ENCODE measurements at regions of chr7 and their contacts with region 1.

Region 1: DNA sequence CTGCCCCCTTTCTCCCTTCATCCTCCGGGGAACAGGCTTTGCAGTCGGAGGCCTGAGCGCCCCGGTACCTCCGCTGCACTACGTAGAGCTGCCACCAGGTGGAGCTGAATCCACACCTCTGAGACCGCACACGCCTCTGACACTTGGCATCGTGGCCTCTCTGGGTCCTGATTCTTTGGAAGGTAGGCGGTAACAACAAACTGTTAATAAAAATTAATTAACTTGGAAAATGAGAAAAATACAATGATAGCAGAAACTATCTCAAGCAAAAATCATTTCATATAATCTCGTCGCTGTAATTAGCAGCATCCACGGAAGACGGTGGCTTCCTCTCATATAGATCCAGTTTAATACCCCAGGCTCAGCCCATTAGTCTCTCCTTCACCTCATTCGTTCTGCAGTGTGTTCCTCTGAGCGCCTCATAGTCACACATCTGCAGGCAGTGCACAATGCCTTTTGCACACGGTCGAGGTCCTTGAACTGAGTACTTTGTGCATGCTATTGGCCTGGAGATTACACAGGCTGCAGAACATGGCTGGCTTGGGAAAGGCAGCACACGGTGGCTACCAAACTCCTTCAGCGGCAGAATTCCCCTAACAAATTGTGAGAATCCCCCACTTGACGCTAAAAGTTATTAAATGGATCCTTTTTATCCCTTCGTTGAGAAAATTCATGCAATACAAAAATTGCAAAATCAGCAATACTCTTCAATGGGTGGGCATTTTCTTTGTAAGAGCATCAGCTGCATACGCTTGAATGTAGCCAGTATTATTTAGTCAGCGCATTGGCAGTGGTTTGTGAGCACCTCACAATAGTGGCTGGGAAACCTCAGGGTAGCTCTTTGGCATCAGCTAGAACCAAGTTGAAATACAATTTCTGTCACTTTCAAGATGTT is 18.7 kb downstream of the OR9A2 start:
- DNase-seq: peak; percentile 78 to 91
- ATAC-seq: peak; percentile 95 to 99 (median 98)
- H3K4me3 ChIP-seq: no peak overlapping the region
- H3K4me3 Mint-ChIP-seq: no peak overlapping the region
- H3K27ac ChIP-seq: no peak overlapping the region
- H3K27ac Mint-ChIP-seq: no peak overlapping the region
- H3K4me1 ChIP-seq: peaks cover 2% of the 10 kb centered on the region
- H3K4me1 Mint-ChIP-seq: peaks cover 10 to 11% of the 10 kb centered on the region in 2 donors
- H3K27me3 ChIP-seq: no peaks in the 10 kb centered on the region
- H3K27me3 Mint-ChIP-seq: peaks cover 20 to 21% of the 10 kb centered on the region in 2 donors
- CTCF ChIP-seq: peak; percentile 91

Region 2: DNA sequence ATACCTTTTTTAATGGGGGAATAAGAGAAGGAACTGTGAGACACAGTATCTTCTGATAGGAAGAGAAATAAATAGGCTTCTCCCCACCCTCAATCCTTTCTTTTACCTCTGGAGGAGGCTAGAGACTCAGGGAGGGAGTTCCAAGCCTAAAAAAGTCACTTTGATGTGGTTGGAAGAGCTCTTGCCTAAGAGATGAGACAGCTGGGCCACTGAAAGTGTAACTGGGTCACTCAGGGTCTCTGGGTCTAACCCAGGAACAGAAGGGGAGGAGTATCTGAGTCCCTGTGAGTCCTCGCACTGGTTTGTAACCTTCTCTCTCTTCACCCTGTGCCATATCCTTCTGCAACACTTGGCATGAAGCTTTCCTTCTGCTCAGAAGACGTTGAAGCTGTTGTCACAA is 1680.0 kb before region 1 on chr7:
- intact Hi-C with region 1: no loop called
- DNase-seq: no peak
- ATAC-seq: no peak
- H3K4me3 ChIP-seq: no peak overlapping the region
- H3K4me3 Mint-ChIP-seq: no peak overlapping the region
- H3K27ac ChIP-seq: no peak overlapping the region
- H3K27ac Mint-ChIP-seq: no peak overlapping the region
- H3K4me1 ChIP-seq: no peaks in the 10 kb centered on the region
- H3K4me1 Mint-ChIP-seq: no peaks in the 10 kb centered on the region
- H3K27me3 ChIP-seq: no peaks in the 10 kb centered on the region
- H3K27me3 Mint-ChIP-seq: peaks cover 8 to 12% of the 10 kb centered on the region in 2 donors
- CTCF ChIP-seq: no peak

Region 3: GRCh38 chr7:142603870-142604448 is 404.3 kb before region 1 on chr7:
- intact Hi-C with region 1: loop called (anchors 1 kb)
- DNase-seq: peak in 1 of 2 donors; percentile 78
- ATAC-seq: peak; percentile 60 to 83 (median 79)
- H3K4me3 ChIP-seq: no peak overlapping the region
- H3K4me3 Mint-ChIP-seq: no peak overlapping the region
- H3K27ac ChIP-seq: no peak overlapping the region
- H3K27ac Mint-ChIP-seq: no peak overlapping the region
- H3K4me1 ChIP-seq: no peaks in the 10 kb centered on the region
- H3K4me1 Mint-ChIP-seq: peaks cover 0 to 5% of the 10 kb centered on the region in 2 donors
- H3K27me3 ChIP-seq: no peaks in the 10 kb centered on the region
- H3K27me3 Mint-ChIP-seq: peaks cover 0 to 3% of the 10 kb centered on the region in 2 donors
- CTCF ChIP-seq: peak; percentile 92

Region 4: GRCh38 chr7:142632291-142633134 is 375.7 kb before region 1 on chr7:
- intact Hi-C with region 1: loop called (anchors 2 kb)
- DNase-seq: peak; percentile 56 to 84
- ATAC-seq: peak; percentile 88 to 99 (median 95)
- H3K4me3 ChIP-seq: no peak overlapping the region
- H3K4me3 Mint-ChIP-seq: no peak overlapping the region
- H3K27ac ChIP-seq: no peak overlapping the region
- H3K27ac Mint-ChIP-seq: peak overlapping the region in 1 of 2 donors; percentile 15
- H3K4me1 ChIP-seq: peaks cover 3% of the 10 kb centered on the region
- H3K4me1 Mint-ChIP-seq: peaks cover 16 to 20% of the 10 kb centered on the region in 2 donors
- H3K27me3 ChIP-seq: no peaks in the 10 kb centered on the region
- H3K27me3 Mint-ChIP-seq: peaks cover 7 to 9% of the 10 kb centered on the region in 2 donors
- CTCF ChIP-seq: peak; percentile 82

Region 5: DNA sequence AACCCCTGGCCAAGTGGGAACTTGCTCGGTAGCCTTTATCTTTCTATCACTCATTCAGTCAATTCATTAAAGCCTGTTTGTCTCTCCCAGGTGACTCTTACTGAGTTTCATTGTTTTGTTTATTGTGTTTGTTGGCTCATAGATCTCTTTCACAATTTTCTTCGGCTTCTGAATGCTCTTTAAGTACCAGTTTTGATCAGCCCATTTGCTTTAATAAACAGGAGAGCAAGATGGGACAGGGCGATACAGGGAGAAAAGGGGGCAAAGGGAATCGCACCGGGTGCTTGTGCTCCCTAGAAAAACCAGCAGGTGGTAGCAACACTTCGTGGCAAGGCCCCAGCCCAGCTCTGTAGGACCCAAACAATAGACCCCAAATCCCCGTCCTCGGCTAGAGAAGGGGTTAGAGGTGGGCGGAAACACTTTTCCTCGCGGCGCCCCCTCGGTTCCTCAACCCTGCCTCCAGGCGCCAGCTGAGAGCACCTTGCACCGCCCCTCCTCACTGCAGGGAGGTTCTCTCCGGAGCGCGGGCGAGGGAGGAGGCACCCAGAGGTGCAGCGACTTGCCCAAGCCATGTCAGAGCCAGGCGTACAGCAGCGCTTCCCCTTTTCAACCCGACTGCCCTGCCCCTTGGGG is 154.4 kb before region 1 on chr7:
- intact Hi-C with region 1: loop called (anchors 1 kb)
- DNase-seq: peak; percentile 49 to 77
- ATAC-seq: peak; percentile 76 to 85 (median 79)
- H3K4me3 ChIP-seq: peak overlapping the region; percentile 88
- H3K4me3 Mint-ChIP-seq: peak overlapping the region; percentile 95
- H3K27ac ChIP-seq: peak overlapping the region; percentile 27
- H3K27ac Mint-ChIP-seq: peak overlapping the region; percentile 60 to 85
- H3K4me1 ChIP-seq: peaks cover 17% of the 10 kb centered on the region
- H3K4me1 Mint-ChIP-seq: peaks cover 10 to 16% of the 10 kb centered on the region in 2 donors
- H3K27me3 ChIP-seq: peaks cover 3% of the 10 kb centered on the region
- H3K27me3 Mint-ChIP-seq: peaks cover 0 to 6% of the 10 kb centered on the region in 2 donors
- CTCF ChIP-seq: peak; percentile 73

Region 6: GRCh38 chr7:143214789-143215679 is 206.8 kb after region 1 on chr7:
- intact Hi-C with region 1: loop called (anchors 1 kb)
- DNase-seq: peak; percentile 29 to 91
- ATAC-seq: peak; percentile 94 to 99 (median 99)
- H3K4me3 ChIP-seq: no peak overlapping the region
- H3K4me3 Mint-ChIP-seq: no peak overlapping the region
- H3K27ac ChIP-seq: no peak overlapping the region
- H3K27ac Mint-ChIP-seq: no peak overlapping the region
- H3K4me1 ChIP-seq: no peaks in the 10 kb centered on the region
- H3K4me1 Mint-ChIP-seq: no peaks in the 10 kb centered on the region
- H3K27me3 ChIP-seq: no peaks in the 10 kb centered on the region
- H3K27me3 Mint-ChIP-seq: peaks cover 0 to 10% of the 10 kb centered on the region in 2 donors
- CTCF ChIP-seq: peak; percentile 100

Region 7: GRCh38 chr7:144606261-144606660 is 1598.0 kb after region 1 on chr7:
- intact Hi-C with region 1: no loop called
- DNase-seq: no peak
- ATAC-seq: no peak
- H3K4me3 ChIP-seq: no peak overlapping the region
- H3K4me3 Mint-ChIP-seq: no peak overlapping the region
- H3K27ac ChIP-seq: no peak overlapping the region
- H3K27ac Mint-ChIP-seq: no peak overlapping the region
- H3K4me1 ChIP-seq: no peaks in the 10 kb centered on the region
- H3K4me1 Mint-ChIP-seq: no peaks in the 10 kb centered on the region
- H3K27me3 ChIP-seq: no peaks in the 10 kb centered on the region
- H3K27me3 Mint-ChIP-seq: no peaks in the 10 kb centered on the region
- CTCF ChIP-seq: no peak